K562 (cell line): ENCODE measurements at regions of chr10 and their contacts with region 1.

Region 1: GRCh38 chr10:49115015-49115795 is at the start of gene VSTM4:
- DNase-seq: peak; percentile 54 to 95 (median 91)
- ATAC-seq: peak; percentile 75
- H3K4me3 ChIP-seq: peak within 1 kb of the TSS; percentile 58
- H3K27ac ChIP-seq: peak within 1 kb of the TSS; percentile 44; the same call in 2 of the 3 replicates
- H3K4me1 ChIP-seq: peaks cover 10 to 12% of the 10 kb centered on the region in 2 experiments; a peak in 4 of 5 replicates
- H3K27me3 ChIP-seq: no peaks in the 10 kb centered on the region
- CTCF ChIP-seq: peak in 1 of 3 experiments; percentile 22; a peak in 1 of 6 replicates
- EP300 ChIP-seq: no peak
- POLR2A ChIP-seq: no peak
- RAD21 ChIP-seq: no peak
- polyA plus RNA-seq, gene VSTM4: 1.0 to 1.1 TPM

Region 2: DNA sequence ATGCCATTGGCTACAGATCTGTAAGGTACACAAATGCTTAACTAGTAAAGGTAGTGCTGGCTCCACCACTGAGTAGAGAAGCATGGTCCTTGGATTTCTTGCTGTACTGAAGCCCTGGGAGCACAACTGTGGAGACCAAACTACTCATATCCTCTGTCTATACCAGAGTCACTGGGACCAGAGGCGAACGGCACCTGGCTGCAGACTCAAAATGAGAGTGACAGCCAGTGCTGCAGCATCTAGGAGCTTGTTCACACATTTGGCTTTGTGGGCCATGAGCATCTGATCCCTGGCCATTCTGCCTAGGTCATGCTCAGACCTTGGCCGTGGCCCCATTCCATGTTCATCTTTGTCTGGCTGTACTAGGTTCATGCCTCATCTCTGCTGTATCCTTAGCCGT is 207.5 kb before region 1 on chr10:
- CTCF ChIA-PET with region 1: no interaction called
- POLR2A ChIA-PET with region 1: no interaction called
- in situ Hi-C with region 1: no loop called
- intact Hi-C with region 1: no loop called
- DNase-seq: no peak
- ATAC-seq: no peak
- H3K4me3 ChIP-seq: no peak overlapping the region
- H3K27ac ChIP-seq: no peak overlapping the region
- H3K4me1 ChIP-seq: no peaks in the 10 kb centered on the region
- H3K27me3 ChIP-seq: peaks cover 8 to 22% of the 10 kb centered on the region in 2 experiments; a peak in 3 of 5 replicates
- CTCF ChIP-seq: no peak
- EP300 ChIP-seq: no peak
- POLR2A ChIP-seq: no peak
- RAD21 ChIP-seq: no peak

Region 3: GRCh38 chr10:48981310-48981907 is 133.8 kb before region 1 on chr10:
- CTCF ChIA-PET with region 1: no interaction called
- POLR2A ChIA-PET with region 1: no interaction called
- in situ Hi-C with region 1: no loop called
- intact Hi-C with region 1: loop called (anchors 5 kb)
- DNase-seq: peak; percentile 84 to 93 (median 88)
- ATAC-seq: peak; percentile 98
- H3K4me3 ChIP-seq: no peak overlapping the region
- H3K27ac ChIP-seq: no peak overlapping the region
- H3K4me1 ChIP-seq: peaks cover 4 to 9% of the 10 kb centered on the region in 2 experiments; a peak in 2 of 5 replicates
- H3K27me3 ChIP-seq: peaks cover 0 to 13% of the 10 kb centered on the region in 2 experiments; a peak in 2 of 5 replicates
- CTCF ChIP-seq: peak; percentile 93 to 97 (median 94)
- EP300 ChIP-seq: no peak
- POLR2A ChIP-seq: no peak
- RAD21 ChIP-seq: peak; percentile 90 to 93

Region 4: GRCh38 chr10:49441488-49442476 is 326.6 kb after region 1 on chr10:
- CTCF ChIA-PET with region 1: no interaction called
- POLR2A ChIA-PET with region 1: no interaction called
- in situ Hi-C with region 1: no loop called
- intact Hi-C with region 1: no loop called
- DNase-seq: no peak
- ATAC-seq: no peak
- H3K4me3 ChIP-seq: no peak overlapping the region
- H3K27ac ChIP-seq: no peak overlapping the region
- H3K4me1 ChIP-seq: peaks cover 0 to 9% of the 10 kb centered on the region in 2 experiments; a peak in 3 of 5 replicates
- H3K27me3 ChIP-seq: peaks cover 19 to 20% of the 10 kb centered on the region in 2 experiments
- CTCF ChIP-seq: no peak
- EP300 ChIP-seq: no peak
- POLR2A ChIP-seq: no peak
- RAD21 ChIP-seq: no peak